Activated naive CD8-positive, alpha-beta T cell treated with anti-CD3 and anti-CD28 coated beads, Interleukin-2, amount 10 ng/mL, durations not matched to agents 7 days and 5 days (primary cell): ENCODE measurements at regions of chr14 and their contacts with region 1.

Region 1: DNA sequence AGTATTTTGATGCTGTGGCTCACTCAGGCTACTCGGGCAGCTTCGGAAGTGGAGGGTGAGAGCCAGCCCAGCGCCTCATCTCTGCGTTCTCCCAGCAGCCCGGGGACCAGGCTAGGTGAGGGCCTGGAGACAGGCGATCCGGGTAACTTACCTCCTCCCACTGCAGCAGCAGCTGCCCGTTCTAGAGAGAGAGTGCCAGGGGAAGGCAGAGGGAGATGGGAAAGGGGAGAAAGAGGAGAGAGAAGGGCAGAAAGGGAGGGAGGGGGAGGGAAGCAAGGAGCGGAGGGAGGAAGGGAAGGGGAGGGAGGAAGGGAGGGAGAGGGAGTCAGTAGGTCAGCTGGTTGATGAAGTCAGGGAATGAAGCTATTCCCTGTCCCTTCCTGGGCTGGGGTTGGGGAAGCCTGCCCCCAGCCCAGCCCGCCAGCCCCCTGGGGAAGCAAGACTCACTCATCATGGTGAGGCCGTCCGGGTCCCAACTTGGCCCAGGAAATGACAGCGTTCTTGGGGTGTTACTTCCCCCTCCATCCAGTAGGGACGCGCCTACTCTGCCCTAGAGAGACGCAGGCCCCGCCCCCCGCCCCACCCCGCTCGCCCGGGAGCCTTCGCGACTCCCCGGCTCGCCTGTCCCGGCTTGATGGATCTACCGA is at the start of gene IFI27L2:
- DNase-seq: peak; percentile 69
- ATAC-seq: peak; percentile 97
- H3K4me3 Mint-ChIP-seq: peak within 1 kb of the TSS; percentile 95
- H3K27ac Mint-ChIP-seq: peak within 1 kb of the TSS; percentile 92
- H3K4me1 Mint-ChIP-seq: peaks cover 13% of the 10 kb centered on the region
- H3K27me3 Mint-ChIP-seq: peaks cover 23% of the 10 kb centered on the region
- total RNA-seq, gene IFI27L2: 76.4 to 77.9 TPM

Region 2: GRCh38 chr14:94110552-94111181 is 18.6 kb before region 1 on chr14 and contains the start of gene IFI27:
- POLR2A ChIA-PET with region 1: interaction called, 11 read pairs
- DNase-seq: no peak
- ATAC-seq: peak; percentile 58
- H3K4me3 Mint-ChIP-seq: peak within 1 kb of the TSS; percentile 85
- H3K27ac Mint-ChIP-seq: peak within 1 kb of the TSS; percentile 92
- H3K4me1 Mint-ChIP-seq: peaks cover 32% of the 10 kb centered on the region
- H3K27me3 Mint-ChIP-seq: no peaks in the 10 kb centered on the region
- total RNA-seq, gene IFI27: 237 to 274 TPM

Region 3: DNA sequence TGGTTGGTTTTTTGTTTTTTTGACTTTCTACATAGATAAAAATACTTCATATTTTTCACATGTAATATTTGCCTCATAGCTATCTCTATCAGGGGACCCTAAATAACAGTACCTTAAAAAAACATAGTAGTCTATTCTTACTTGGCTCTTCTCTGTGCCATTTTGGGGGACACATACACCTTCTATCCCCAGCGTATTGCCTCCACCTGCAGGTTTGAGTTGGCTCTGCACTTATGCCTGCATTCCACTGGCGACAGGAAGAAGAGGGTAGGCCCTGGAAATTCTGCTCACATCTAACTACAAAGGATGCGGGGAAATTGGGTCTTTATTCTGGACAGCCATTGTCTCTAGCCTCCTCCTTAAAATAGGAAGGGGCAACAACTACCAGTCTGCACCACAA is 14.0 kb after region 1 on chr14:
- POLR2A ChIA-PET with region 1: no interaction called
- DNase-seq: no peak
- ATAC-seq: peak; percentile 66
- H3K4me3 Mint-ChIP-seq: no peak overlapping the region
- H3K27ac Mint-ChIP-seq: no peak overlapping the region
- H3K4me1 Mint-ChIP-seq: peaks cover 16% of the 10 kb centered on the region
- H3K27me3 Mint-ChIP-seq: peaks cover 1% of the 10 kb centered on the region

Region 4: DNA sequence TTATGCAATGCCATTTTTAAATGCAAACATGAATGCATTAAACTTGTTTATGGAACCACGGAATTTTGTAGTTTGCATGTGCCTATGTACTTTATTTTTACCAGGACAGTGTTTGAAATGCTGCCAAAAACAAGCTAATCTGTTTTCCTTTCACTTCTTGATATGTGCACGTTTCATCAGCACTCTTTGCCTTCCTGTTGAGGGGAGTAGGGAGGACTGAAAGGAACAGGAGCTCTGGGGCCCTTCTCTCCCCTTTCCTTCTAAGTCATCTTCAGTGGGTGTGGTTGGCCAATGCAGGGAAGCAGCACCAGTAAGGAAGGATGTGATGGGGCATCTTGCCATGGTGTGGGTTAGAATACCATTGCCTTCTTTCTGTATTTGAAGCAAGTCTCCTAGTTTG is 32.7 kb after region 1 on chr14:
- POLR2A ChIA-PET with region 1: no interaction called
- DNase-seq: no peak
- ATAC-seq: no peak
- H3K4me3 Mint-ChIP-seq: no peak overlapping the region
- H3K27ac Mint-ChIP-seq: no peak overlapping the region
- H3K4me1 Mint-ChIP-seq: peaks cover 26% of the 10 kb centered on the region
- H3K27me3 Mint-ChIP-seq: peaks cover 3% of the 10 kb centered on the region